A673 (cell line): ENCODE measurements at regions of chr6 and their contacts with region 1.

Region 1: GRCh38 chr6:32166411-32167061 is 2.1 kb downstream of the EGFL8 start:
- DNase-seq: no peak
- H3K4me3 ChIP-seq: no peak overlapping the region
- H3K27ac ChIP-seq: no peak overlapping the region
- H3K4me1 ChIP-seq: peaks cover 17% of the 10 kb centered on the region
- H3K27me3 ChIP-seq: no peaks in the 10 kb centered on the region
- CTCF ChIP-seq: no peak

Region 2: DNA sequence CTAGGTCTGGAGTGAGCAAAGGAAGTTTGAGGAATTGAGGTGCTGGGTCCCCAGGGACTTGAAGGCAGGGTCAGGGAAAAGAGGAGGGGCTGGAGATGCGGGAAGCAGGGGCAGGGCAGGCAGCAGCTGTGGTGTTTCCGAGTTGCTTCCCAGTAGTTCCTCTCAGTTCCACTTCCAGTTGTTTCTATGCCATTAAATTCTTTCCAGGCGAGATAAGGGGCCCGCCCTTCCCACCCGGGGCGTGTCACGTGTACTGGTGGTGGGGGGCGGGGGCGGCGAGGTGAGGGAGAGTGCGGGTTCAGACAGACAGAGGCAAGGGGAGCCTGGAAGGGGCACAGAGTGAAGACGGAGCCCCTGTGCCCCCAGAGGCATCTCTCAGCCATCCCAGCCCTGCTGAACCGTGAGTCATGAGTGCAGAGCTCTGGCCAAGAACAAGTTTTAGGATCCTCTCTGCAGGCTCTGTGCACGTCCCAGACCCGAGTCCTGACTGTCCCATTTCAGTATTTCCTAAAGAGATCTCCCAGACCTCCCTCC is 58.4 kb before region 1 on chr6:
- CTCF ChIA-PET with region 1: no interaction called
- POLR2A ChIA-PET with region 1: interaction called, 12 read pairs
- intact Hi-C with region 1: no loop called
- DNase-seq: peak; percentile 40
- H3K4me3 ChIP-seq: no peak overlapping the region
- H3K27ac ChIP-seq: no peak overlapping the region
- H3K4me1 ChIP-seq: peaks cover 14% of the 10 kb centered on the region
- H3K27me3 ChIP-seq: peaks cover 5% of the 10 kb centered on the region
- CTCF ChIP-seq: no peak

Region 3: DNA sequence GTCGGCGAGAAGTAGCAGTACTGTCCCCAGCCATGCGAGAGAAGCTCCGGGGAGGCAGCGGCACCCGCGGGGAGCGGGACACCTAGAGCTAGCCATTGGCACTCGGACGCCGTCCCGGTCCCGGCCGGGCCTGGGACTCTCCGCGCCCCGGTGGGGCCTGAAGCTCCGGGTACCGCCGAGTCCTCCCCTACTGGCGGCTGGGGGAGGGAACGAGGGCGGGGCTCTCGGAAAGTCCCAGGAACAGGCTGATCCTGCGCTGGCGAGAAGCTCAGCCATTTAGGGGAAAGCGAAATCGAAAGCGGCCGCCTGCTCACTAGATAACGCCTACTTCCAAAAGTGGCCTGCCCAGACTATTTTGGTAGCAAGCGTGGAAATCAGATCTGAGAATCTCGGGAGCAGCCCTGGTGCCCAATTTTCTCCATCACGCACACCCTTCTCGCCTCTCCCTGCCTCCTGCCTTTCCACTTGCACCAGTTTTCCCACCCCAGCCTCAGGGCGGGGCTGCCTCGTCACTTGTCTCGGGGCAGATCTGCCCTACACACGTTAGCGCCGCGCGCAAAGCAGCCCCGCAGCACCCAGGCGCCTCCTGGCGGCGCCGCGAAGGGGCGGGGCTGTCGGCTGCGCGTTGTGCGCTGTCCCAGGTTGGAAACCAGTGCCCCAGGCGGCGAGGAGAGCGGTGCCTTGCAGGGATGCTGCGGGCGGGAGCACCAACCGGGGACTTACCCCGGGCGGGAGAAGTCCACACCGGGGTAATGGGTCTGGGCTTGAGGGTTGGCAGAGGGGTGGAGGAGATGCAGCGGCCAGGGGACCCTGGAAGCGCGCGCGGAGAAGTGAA is 687.2 kb after region 1 on chr6 and contains the starts of genes PSMB9 and TAP1:
- CTCF ChIA-PET with region 1: interaction called, 11 read pairs
- POLR2A ChIA-PET with region 1: no interaction called
- intact Hi-C with region 1: no loop called
- DNase-seq: peak; percentile 96
- H3K4me3 ChIP-seq: peak within 1 kb of the TSS; percentile 93
- H3K27ac ChIP-seq: peak within 1 kb of the TSS; percentile 77
- H3K4me1 ChIP-seq: no peaks in the 10 kb centered on the region
- H3K27me3 ChIP-seq: peaks cover 27% of the 10 kb centered on the region
- CTCF ChIP-seq: peak; percentile 90
- total RNA-seq, gene PSMB9: 4.3 and 6.8 TPM in 2 replicates
- total RNA-seq, gene TAP1: 11.7 and 12.3 TPM in 2 replicates